ENCODE measurements at regions of chr11 and their contacts with region 1.

Region 1: DNA sequence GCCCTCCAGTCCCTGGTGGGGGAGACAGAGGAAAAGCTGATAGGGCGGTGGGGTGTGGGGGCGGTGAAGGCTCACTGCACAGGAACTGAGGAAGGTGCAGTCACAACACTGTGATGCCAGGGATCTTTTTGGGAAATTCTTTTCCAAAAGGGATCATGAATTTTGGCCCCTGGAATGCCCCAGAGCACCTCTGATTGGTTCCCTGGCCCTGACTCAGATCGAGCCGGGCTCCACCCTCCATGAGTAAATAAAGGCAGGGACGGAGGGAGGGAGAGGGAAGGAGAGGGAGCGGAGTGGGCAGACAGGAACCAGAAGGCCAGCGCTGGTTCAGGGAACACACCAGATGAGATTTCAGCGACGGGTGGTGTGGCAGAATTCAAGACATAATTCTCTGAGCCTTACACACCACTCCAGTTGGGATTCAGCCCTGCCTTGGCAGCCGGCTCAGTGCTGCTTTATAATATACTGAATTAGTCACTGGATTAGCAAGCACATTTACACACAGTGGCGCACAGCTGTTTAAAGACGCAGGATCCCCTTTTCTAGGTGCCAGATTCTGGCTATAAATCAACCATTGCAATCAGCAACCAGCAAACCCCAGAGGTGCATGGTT is 80.3 kb downstream of the ETS1 start:
- DNase-seq: no peak
- ATAC-seq: peak; percentile 64
- H3K4me3 Mint-ChIP-seq: peak overlapping the region; percentile 74
- H3K27ac Mint-ChIP-seq: peak overlapping the region; percentile 77
- H3K4me1 Mint-ChIP-seq: peaks cover 100% of the 10 kb centered on the region
- H3K27me3 Mint-ChIP-seq: no peaks in the 10 kb centered on the region
- CTCF ChIP-seq: no peak

Region 2: DNA sequence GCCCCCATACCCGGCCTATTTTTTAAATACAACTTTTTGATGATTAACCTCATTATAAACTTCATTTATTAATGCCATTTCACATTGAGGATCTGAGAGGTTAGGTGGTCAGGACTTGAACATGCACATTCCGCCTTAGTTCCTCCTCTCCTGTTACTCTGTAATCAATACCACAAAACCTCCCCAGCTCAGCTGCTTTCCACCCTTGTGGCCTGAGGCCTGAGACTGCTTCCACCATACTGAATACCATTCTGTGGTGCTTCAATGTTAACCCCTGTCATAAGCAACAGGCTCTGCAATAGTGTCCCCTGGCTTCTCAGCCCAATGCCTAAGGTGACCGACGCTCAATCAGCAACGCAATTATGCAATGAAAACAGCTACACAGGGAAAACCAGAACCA is 325.1 kb before region 1 on chr11:
- CTCF ChIA-PET with region 1: no interaction called
- POLR2A ChIA-PET with region 1: interaction called, 11 read pairs
- intact Hi-C with region 1: no loop called
- DNase-seq: no peak
- ATAC-seq: no peak
- H3K4me3 Mint-ChIP-seq: no peak overlapping the region
- H3K27ac Mint-ChIP-seq: no peak overlapping the region
- H3K4me1 Mint-ChIP-seq: no peaks in the 10 kb centered on the region
- H3K27me3 Mint-ChIP-seq: no peaks in the 10 kb centered on the region
- CTCF ChIP-seq: no peak

Region 3: DNA sequence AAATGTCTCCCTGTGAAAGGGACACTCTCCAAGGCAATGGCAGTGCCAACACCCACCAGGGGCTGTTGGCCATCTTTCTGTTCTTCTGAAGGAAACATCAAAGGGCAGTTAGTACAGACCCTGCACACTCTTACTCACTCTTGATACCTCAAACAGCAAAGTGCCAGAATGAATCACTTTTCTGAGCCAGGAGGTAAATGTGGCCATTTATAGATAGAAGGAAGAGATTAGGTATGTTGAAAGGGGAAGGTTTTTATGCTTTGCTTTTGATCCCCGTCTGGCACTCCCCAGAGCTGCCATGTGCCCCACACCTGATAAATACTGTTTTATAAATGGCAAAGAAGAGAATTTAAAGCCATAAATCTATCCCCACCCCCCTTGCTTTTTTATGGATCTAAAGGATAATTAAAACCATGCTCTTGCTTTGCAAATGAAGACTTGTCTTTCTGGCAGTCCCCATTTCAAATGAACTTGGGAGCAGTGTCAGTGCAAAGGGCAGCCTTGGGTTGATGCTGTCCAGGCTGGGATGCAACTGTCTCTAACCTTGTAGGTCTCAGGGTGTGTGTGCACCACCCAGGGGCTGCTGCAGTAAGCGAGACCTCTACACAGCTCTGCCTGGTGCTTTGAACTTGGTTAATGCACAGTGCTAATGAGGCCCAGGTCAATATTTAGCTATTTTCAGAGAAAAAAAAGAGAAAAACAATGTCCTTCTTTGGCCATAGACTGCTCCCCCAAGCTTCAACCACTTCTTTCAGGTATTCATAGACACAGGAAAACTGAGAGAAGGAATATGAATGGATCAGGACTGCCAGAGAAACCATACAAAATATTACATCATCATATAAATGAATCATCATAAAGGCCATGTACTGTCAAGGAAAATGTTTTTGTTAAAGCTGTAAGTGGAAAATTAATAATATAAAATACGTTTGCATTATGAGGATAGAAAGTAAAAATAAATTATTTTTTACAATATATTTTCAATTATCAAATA is 127.2 kb before region 1 on chr11:
- CTCF ChIA-PET with region 1: no interaction called
- POLR2A ChIA-PET with region 1: no interaction called
- intact Hi-C with region 1: no loop called
- DNase-seq: no peak
- ATAC-seq: no peak
- H3K4me3 Mint-ChIP-seq: no peak overlapping the region
- H3K27ac Mint-ChIP-seq: no peak overlapping the region
- H3K4me1 Mint-ChIP-seq: peaks cover 4% of the 10 kb centered on the region
- H3K27me3 Mint-ChIP-seq: no peaks in the 10 kb centered on the region
- CTCF ChIP-seq: no peak